ENCODE measurements at regions of chr16 and their contacts with region 1.

Region 1: GRCh38 chr16:83215406-83216001 is 588.7 kb downstream of the CDH13 start:
- DNase-seq: peak; percentile 16
- H3K4me3 Mint-ChIP-seq: no peak overlapping the region
- H3K27ac Mint-ChIP-seq: no peak overlapping the region
- H3K4me1 Mint-ChIP-seq: no peaks in the 10 kb centered on the region
- H3K27me3 Mint-ChIP-seq: peaks cover 2% of the 10 kb centered on the region

Region 2: DNA sequence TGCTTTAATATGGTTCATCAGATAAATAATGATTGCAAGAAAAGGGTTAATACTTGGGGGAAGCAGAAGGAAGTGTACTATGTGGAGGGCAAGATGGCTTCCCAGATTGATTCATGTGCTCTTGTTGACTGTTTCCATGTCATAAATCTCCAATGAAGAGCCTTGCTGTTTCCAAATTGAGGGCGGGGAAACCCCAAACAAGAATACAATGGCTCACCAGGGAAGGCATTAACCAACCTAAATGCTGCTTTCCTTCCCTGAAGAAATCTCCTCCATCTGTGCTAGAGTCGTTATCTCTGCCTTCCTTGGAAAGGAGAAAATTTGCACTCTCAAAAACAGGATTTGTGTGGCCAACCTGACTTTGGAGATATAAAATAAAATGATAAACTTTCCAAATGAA is 616.7 kb before region 1 on chr16:
- intact Hi-C with region 1: no loop called
- DNase-seq: no peak
- H3K4me3 Mint-ChIP-seq: no peak overlapping the region
- H3K27ac Mint-ChIP-seq: no peak overlapping the region
- H3K4me1 Mint-ChIP-seq: no peaks in the 10 kb centered on the region
- H3K27me3 Mint-ChIP-seq: peaks cover 4% of the 10 kb centered on the region

Region 3: DNA sequence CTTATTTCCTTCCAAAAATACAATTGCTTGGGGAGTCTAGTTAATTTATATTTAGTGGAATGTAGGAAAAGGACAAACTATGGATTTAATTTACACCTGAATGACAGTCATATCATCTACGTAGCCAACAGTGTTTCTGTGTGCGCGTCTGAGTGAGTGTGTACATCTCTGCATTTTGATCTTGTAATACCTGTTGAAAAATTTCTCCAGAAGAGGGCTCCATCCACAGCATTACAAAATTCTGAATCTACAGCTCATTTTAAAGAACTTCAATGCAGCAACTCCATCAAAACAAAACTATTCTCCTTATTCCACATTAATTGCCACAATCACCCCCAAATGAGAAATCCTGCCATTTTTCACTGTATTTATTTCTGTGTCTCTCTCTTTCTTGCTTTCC is 584.8 kb before region 1 on chr16:
- intact Hi-C with region 1: loop called (anchors 2 kb)
- DNase-seq: no peak
- H3K4me3 Mint-ChIP-seq: no peak overlapping the region
- H3K27ac Mint-ChIP-seq: no peak overlapping the region
- H3K4me1 Mint-ChIP-seq: peaks cover 17% of the 10 kb centered on the region
- H3K27me3 Mint-ChIP-seq: peaks cover 54% of the 10 kb centered on the region

Region 4: GRCh38 chr16:82945420-82946101 is 269.9 kb before region 1 on chr16:
- intact Hi-C with region 1: no loop called
- DNase-seq: no peak
- H3K4me3 Mint-ChIP-seq: no peak overlapping the region
- H3K27ac Mint-ChIP-seq: no peak overlapping the region
- H3K4me1 Mint-ChIP-seq: peaks cover 8% of the 10 kb centered on the region
- H3K27me3 Mint-ChIP-seq: peaks cover 2% of the 10 kb centered on the region

Region 5: DNA sequence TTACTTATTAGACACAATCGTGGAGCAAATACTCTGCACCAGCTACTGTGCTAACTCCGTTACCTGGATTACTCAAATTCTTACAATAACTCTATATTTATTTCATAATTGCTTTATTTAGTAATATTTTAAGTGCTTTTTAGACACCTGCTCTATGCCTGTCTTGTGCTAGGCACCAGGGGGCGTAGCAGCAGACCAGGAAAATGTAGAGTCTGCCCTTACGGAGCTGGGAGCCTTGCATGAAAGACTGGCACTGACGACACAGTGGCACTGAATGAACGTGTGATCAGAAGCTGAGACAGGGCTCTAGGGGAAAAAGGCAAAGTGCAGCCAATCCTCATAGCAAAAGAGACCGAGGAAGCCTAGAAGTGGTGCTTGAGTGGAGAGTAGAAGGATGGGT is 102.2 kb before region 1 on chr16:
- intact Hi-C with region 1: loop called (anchors 1 kb)
- DNase-seq: no peak
- H3K4me3 Mint-ChIP-seq: no peak overlapping the region
- H3K27ac Mint-ChIP-seq: no peak overlapping the region
- H3K4me1 Mint-ChIP-seq: no peaks in the 10 kb centered on the region
- H3K27me3 Mint-ChIP-seq: peaks cover 3% of the 10 kb centered on the region